ENCODE measurements at regions of chr19 and their contacts with region 1.

Region 1: GRCh38 chr19:20423381-20424197 is 142.0 kb downstream of the ZNF737 start:
- DNase-seq: peak; percentile 10 to 62 (median 53)
- ATAC-seq: peak; percentile 59
- H3K4me3 ChIP-seq: no peak overlapping the region
- H3K4me1 ChIP-seq: no peaks in the 10 kb centered on the region
- CTCF ChIP-seq: no peak

Region 2: GRCh38 chr19:20339444-20339843 is 84.1 kb before region 1 on chr19:
- intact Hi-C with region 1: no loop called
- DNase-seq: no peak
- ATAC-seq: no peak
- H3K4me3 ChIP-seq: no peak overlapping the region
- H3K4me1 ChIP-seq: no peaks in the 10 kb centered on the region
- CTCF ChIP-seq: no peak

Region 3: DNA sequence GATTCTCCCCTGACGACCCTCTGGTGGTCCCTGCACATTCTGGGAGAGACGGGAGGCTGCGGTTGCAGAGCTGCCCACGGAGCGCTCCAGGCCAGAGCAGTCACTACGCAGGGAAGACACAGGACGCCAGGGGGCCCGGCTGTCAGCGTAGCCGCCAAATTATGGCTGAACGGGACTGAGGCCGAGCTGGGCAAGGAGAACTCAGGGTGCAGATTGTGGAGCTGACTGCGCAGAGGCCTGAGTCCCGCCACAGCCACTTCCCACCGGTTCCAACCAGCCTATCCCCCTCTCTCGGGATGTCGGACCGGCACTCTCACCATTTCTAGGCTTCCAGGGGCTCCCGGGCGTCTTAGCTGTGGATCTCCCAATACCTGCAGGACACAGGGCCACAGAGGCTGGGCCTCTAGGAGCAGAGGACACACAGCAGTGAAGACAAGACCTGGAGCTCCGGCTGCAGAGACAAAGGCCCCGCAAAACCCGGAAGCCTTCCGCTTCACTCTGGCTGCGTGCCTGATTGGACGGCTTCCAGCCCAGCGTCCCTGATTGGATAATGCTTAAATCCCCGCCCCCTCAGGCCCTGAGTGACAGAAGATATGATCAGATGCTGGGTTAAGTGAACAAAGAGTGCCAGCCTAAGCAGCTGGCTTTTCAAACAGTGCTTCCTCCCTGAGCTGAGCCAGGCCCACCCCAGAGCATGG is 141.9 kb after region 1 on chr19 and contains the start of gene ZNF737:
- intact Hi-C with region 1: loop called in 1 of 2 experiments (anchors 10 kb)
- DNase-seq: peak; percentile 93 to 98 (median 97)
- ATAC-seq: peak; percentile 99
- H3K4me3 ChIP-seq: peak within 1 kb of the TSS; percentile 52
- H3K4me1 ChIP-seq: peaks cover 3% of the 10 kb centered on the region
- CTCF ChIP-seq: no peak
- total RNA-seq, gene ZNF737: 9.5 to 16.0 (median 11.2) TPM